Cardiac septum (tissue), 1 donor: ENCODE measurements at regions of chr10 and their contacts with region 1.

Region 1: DNA sequence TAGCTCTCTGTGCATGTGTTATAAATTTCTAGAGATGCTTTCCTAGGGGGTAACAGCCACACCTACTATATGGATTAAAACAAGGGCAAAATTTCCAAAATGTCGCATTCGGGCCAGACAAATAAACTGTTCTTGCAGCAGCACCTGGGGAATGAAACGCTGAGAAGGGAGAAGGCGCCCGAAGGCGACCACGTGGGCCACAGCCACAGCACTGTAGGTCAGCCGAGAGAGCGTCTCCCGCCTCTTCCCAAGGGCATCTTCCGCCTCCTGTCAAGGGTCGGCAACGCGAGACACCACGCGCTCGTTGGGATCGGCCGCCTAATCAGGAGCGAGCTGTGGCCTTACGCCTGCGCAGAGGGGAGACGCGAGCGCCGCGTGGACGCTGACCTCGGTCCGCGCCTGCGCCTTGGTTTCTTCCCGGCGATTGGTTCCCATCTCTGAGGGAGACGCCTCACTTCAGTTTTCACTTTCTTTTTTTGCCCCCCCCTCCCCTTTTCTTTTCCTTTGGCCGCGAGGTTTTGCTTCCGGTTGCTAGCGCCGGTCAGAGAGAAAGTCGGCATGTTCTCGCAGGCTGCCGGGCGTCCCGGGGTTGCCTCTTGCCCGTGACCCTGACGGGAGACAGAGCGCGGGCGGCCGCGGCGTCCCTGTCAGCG is at the start of gene TASOR2:
- DNase-seq: peak; percentile 99
- total RNA-seq, gene TASOR2: 38.8 TPM

Region 2: GRCh38 chr10:5548527-5549223 is 135.8 kb before region 1 on chr10:
- intact Hi-C with region 1: no loop called
- DNase-seq: peak; percentile 72

Region 3: DNA sequence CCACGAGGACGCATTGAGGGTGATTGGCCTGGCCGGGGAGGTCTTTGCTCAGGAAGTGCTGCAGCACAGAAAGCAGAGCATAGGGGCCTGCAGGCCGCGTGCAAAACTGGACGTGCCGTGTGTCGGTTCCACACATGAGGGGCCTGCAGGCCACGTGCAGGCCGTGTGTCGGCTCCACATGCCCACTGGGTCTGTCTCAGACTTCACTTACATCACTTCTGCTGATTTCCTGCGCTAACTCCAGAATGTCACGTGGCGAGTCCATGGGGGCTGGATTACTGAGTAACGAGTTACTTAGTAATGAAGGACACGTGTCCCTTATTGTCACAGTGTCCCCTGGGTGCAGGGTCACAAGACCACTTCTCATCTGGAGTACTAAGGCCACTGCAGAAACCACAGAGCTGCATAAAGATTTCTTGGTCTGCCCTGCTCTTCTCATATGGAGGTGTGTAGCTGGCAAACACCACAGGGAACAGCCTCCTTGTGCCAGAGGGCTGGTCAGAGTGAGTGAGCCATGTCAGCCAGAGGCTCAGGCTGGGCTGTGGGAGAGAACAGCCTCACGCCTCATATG is 67.9 kb after region 1 on chr10:
- intact Hi-C with region 1: loop called (anchors 10 kb)
- DNase-seq: no peak

Region 4: DNA sequence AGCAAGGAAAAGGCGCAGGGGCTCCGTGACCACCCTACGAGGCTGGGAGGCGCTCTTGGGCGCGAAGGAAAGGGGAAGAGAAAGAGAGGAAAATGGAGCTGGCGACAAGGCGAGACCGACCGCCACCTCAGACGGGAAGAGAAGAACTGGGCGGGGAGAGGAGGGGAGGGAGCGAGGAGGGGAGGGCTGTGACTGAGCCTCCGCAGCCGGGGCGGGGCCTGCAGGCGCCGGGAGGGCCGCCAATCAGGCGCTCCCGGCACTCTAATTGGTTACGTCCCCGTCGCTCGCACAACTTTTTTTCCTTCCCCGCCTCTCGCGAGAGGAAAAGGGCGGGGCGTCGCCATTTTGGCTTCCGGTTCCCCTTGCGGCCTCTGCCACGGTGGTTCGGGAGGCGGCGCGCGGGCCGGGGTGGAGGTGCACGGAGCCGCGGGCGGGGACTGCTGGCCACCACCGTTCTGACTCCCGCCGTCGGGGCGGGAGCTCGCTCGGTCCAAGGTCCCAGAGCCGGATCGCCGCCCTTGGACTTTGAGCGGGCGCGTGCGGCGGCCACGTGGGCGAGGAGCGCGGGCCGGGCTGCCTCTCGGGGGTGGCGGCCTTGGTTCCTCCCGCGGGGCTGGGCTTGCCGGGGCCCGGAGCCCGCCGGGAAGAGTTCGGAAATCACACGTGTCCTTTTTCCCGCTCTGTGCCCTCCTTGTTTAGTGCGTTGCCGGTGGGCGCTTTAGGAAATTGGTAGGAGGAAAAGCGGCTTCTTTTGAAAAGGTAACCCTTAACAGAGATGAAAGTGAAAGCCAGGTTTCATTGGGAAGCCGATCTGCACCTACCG is 129.1 kb after region 1 on chr10 and contains the start of gene GDI2:
- intact Hi-C with region 1: loop called (anchors 2 kb)
- DNase-seq: peak; percentile 98
- total RNA-seq, gene GDI2: 107 TPM